ENCODE measurements at regions of chr2 and their contacts with region 1.

Region 1: GRCh38 chr2:181742922-181743722 is 62.8 kb upstream of the NEUROD1 start:
- DNase-seq: peak in 3 of 5 donors; percentile 2 to 50 (median 26)
- H3K4me3 ChIP-seq: no peak overlapping the region
- H3K4me3 Mint-ChIP-seq: no peak overlapping the region
- H3K27ac ChIP-seq: no peak overlapping the region
- H3K27ac Mint-ChIP-seq: no peak overlapping the region
- H3K4me1 ChIP-seq: no peaks in the 10 kb centered on the region
- H3K4me1 Mint-ChIP-seq: no peaks in the 10 kb centered on the region
- H3K27me3 ChIP-seq: no peaks in the 10 kb centered on the region
- H3K27me3 Mint-ChIP-seq: peaks cover under 1 to 15% of the 10 kb centered on the region in 2 donors

Region 2: GRCh38 chr2:181953881-181954537 is 210.9 kb after region 1 on chr2:
- CTCF ChIA-PET with region 1: interaction called, 10 read pairs
- POLR2A ChIA-PET with region 1: no interaction called
- DNase-seq: peak; percentile 34 to 73 (median 42)
- H3K4me3 ChIP-seq: no peak overlapping the region
- H3K4me3 Mint-ChIP-seq: peak overlapping the region in 6 of 7 donors; percentile 20 to 80 (median 56)
- H3K27ac ChIP-seq: no peak overlapping the region
- H3K27ac Mint-ChIP-seq: peak overlapping the region in 1 of 8 donors; percentile 19
- H3K4me1 ChIP-seq: peaks cover 5% of the 10 kb centered on the region
- H3K4me1 Mint-ChIP-seq: peaks cover 9 to 16% (median 16%) of the 10 kb centered on the region in 3 donors
- H3K27me3 ChIP-seq: no peaks in the 10 kb centered on the region
- H3K27me3 Mint-ChIP-seq: peaks cover 8 to 39% of the 10 kb centered on the region in 2 donors

Measured in CD8-positive, alpha-beta memory T cell (primary cell).